T-cell (primary cell): ENCODE measurements at regions of chr16 and their contacts with region 1.

Region 1: GRCh38 chr16:5768445-5768844 is 670.9 kb upstream of the EEF2KMT start:
- DNase-seq: no peak
- ATAC-seq: no peak
- H3K4me3 ChIP-seq: no peak overlapping the region
- H3K4me3 Mint-ChIP-seq: no peak overlapping the region
- H3K27ac ChIP-seq: no peak overlapping the region
- H3K27ac Mint-ChIP-seq: no peak overlapping the region
- H3K4me1 ChIP-seq: no peaks in the 10 kb centered on the region
- H3K4me1 Mint-ChIP-seq: no peaks in the 10 kb centered on the region
- H3K27me3 ChIP-seq: no peaks in the 10 kb centered on the region
- H3K27me3 Mint-ChIP-seq: peaks cover 0 to 4% of the 10 kb centered on the region in 2 donors

Region 2: GRCh38 chr16:5801396-5801795 is 33.0 kb after region 1 on chr16:
- CTCF ChIA-PET with region 1: no interaction called
- POLR2A ChIA-PET with region 1: no interaction called
- DNase-seq: no peak
- ATAC-seq: no peak
- H3K4me3 ChIP-seq: no peak overlapping the region
- H3K4me3 Mint-ChIP-seq: no peak overlapping the region
- H3K27ac ChIP-seq: no peak overlapping the region
- H3K27ac Mint-ChIP-seq: no peak overlapping the region
- H3K4me1 ChIP-seq: no peaks in the 10 kb centered on the region
- H3K4me1 Mint-ChIP-seq: no peaks in the 10 kb centered on the region
- H3K27me3 ChIP-seq: no peaks in the 10 kb centered on the region
- H3K27me3 Mint-ChIP-seq: no peaks in the 10 kb centered on the region

Region 3: DNA sequence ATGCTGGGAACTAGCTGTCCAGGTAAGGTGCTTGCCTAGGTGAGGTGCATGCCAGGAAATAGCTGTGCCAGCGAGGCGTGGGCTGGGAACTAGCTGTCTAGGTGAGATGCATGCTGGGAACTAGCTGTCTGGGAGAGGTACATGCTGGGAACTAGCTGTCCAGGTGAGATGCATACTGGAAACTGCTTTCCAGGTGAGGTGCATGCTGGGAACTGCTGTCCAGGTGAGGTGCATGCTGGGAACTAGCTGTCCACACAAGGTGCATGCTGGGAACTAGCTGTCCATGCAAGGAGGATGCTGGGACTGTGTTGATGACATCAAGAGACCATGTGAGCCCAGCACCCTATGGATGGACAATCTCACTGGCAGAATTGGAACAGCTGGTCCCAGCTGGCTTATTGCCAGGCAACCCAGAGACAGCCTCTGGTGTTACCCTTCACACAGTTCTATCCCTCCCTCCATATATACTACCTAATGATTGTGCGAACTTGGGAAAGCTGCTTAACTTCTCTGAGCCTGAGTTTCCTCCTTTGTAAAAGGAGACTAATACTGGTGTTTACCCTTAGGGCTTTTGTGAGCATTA is 1084.3 kb after region 1 on chr16:
- CTCF ChIA-PET with region 1: no interaction called
- POLR2A ChIA-PET with region 1: interaction called in 1 of 2 experiments, 11 read pairs
- DNase-seq: no peak
- ATAC-seq: no peak
- H3K4me3 ChIP-seq: no peak overlapping the region
- H3K4me3 Mint-ChIP-seq: no peak overlapping the region
- H3K27ac ChIP-seq: no peak overlapping the region
- H3K27ac Mint-ChIP-seq: no peak overlapping the region
- H3K4me1 ChIP-seq: no peaks in the 10 kb centered on the region
- H3K4me1 Mint-ChIP-seq: no peaks in the 10 kb centered on the region
- H3K27me3 ChIP-seq: no peaks in the 10 kb centered on the region
- H3K27me3 Mint-ChIP-seq: no peaks in the 10 kb centered on the region